Activated CD8-positive, alpha-beta memory T cell treated with anti-CD3 and anti-CD28 coated beads, Interleukin-2, amount 10 ng/mL, durations not matched to agents 7 days and 5 days (primary cell): ENCODE measurements at regions of chr19 and their contacts with region 1.

Region 1: DNA sequence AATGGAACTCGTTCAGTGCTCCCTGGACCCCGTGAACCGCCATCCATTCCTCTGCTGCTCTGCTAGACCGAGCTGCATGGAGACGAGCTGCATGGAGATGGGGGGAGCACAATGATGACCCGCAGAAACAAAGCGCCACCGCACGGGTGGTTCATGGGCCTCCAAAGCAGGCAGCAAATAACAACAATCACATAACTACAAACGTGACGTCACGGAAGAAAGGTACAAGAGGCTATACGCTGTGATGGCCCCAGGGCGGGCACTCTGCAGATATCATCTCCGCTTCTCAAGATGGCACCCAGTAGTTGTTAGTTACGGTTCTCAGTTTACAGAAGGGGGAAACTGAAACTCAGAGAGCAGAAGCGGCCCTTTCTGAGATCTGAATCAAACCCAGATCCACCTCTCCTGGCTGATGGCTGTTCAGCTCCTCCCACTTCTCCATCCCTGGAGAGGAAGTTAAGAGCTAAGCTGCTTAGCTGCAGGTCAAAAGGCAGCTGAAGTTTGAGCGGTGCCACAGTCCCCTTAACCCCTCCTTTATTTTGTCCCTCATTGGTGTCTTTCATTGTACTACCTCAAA is 1.7 kb downstream of the ATP13A1 start:
- DNase-seq: peak; percentile 91
- ATAC-seq: peak; percentile 54
- H3K4me3 Mint-ChIP-seq: peak overlapping the region; percentile 82
- H3K27ac Mint-ChIP-seq: peak overlapping the region; percentile 93
- H3K4me1 Mint-ChIP-seq: peaks cover 36% of the 10 kb centered on the region
- H3K27me3 Mint-ChIP-seq: no peaks in the 10 kb centered on the region

Region 2: DNA sequence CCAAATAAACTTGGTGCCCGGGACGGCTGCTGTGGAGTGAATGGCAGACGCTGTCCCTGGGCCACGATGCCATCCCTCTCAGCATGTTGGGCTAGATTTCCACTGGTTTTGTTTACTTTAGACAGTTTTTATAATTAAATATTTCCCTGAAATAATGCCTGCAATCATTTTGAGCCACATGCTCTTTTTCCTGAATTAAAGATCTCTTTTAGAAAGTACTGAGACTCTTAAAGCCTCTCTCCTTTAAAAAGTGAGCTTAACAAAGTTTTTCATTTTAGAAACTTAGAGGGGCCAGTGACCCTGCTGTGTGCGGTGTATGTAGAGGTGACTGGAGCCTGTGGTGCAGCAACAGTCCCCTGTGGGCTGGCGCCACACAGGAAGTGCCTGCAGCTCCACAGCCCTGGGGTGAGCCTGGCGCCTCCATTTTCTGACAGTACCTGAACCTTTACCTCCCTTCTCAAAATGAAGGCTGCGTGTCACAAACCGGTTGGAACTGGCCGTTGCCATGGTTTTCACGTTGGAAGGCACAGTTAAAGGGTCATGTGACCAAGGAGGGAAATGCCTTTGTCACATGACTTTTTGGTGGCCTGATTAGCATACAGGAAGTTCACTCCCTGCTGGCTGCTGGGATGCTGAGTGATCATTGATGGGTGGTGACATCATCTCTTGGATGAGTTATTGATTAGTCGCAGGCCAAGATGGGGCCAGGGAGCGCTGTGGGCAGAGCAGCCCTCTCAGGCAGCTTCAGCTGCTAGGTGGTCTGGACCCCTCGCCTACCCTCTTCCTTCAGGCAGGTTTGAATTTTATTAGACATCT is 172.7 kb before region 1 on chr19:
- CTCF ChIA-PET with region 1: no interaction called
- DNase-seq: peak; percentile 99
- ATAC-seq: peak; percentile 87
- H3K4me3 Mint-ChIP-seq: peak overlapping the region; percentile 43
- H3K27ac Mint-ChIP-seq: peak overlapping the region; percentile 95
- H3K4me1 Mint-ChIP-seq: peaks cover 44% of the 10 kb centered on the region
- H3K27me3 Mint-ChIP-seq: no peaks in the 10 kb centered on the region

Region 3: DNA sequence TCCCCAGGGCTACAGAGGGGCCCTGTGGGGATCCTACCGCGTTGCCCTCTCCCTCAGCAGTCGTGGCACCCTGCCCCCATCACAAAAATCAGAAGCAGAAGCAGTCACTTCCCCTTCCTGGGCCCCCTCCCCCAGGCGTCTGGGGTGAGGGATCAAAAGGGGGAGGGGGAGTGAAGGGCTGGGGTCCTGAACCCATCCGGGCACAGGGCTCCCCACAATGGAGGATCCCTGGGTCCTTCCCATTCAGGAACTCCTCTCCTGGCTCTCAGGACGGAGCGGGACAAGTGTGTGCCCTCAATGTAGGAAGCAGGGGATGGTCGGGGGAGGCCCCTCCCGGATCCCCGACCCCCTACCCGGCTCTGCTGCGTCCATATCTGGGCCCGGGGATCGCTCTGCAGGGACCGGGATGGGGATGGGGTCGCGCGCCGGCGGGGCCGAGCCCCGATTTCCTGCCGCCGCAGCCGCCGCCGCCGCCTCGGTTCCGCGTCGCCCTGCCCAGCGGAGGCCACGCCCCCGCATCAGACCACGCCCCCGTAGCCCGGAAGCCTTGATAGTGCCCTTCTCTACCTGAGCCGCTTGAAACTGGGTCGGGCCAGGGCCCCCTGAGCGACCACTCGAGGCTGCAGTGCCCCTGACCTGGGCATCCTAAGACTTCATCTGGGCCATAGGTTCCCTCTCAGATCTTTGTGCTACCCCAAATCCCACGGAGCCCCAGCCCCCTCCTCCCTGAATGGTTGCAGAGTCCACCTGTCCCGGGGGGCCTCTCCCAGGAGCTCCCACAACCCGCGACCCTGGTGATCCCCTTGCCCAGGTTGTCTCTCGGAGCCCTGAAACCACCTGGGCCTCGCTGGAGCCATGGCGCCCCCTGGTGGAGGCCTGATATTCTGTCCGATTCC is 18.4 kb before region 1 on chr19 and contains the start of gene GMIP:
- CTCF ChIA-PET with region 1: interaction called, 17 read pairs
- DNase-seq: peak; percentile 91
- ATAC-seq: peak; percentile 93
- H3K4me3 Mint-ChIP-seq: peak within 1 kb of the TSS; percentile 95
- H3K27ac Mint-ChIP-seq: peak within 1 kb of the TSS; percentile 99
- H3K4me1 Mint-ChIP-seq: peaks cover 17% of the 10 kb centered on the region
- H3K27me3 Mint-ChIP-seq: no peaks in the 10 kb centered on the region
- total RNA-seq, gene GMIP: 110 to 111 TPM

Region 4: DNA sequence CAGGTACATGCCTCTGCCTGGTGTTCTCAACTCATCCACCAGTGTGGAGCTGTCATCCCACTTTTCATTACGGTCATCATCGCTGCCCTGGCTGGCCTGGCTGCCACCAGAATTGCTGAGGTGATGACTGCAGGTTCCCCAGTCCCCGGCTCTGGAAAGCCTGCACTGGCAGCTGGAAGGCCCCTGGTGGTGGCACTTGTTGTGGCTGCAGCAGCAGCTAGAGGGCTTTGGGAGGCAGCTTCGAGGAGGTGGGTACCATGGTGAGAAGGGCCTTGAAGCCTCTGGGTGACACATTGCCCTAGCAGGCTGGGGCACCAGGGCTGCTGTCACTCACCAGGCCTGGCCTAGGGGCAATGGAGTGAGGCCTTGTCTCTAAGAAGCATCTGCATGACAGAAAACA is 96.4 kb after region 1 on chr19:
- CTCF ChIA-PET with region 1: no interaction called
- DNase-seq: no peak
- ATAC-seq: no peak
- H3K4me3 Mint-ChIP-seq: no peak overlapping the region
- H3K27ac Mint-ChIP-seq: no peak overlapping the region
- H3K4me1 Mint-ChIP-seq: no peaks in the 10 kb centered on the region
- H3K27me3 Mint-ChIP-seq: no peaks in the 10 kb centered on the region